ENCODE measurements at regions of chr18 and their contacts with region 1.

Region 1: GRCh38 chr18:74495581-74496507 is at the start of gene CNDP2:
- DNase-seq: peak; percentile 96
- ATAC-seq: peak; percentile 82
- H3K4me3 ChIP-seq: peak within 1 kb of the TSS; percentile 95
- H3K27ac ChIP-seq: peak within 1 kb of the TSS; percentile 76
- H3K4me1 ChIP-seq: peaks cover 18% of the 10 kb centered on the region
- H3K27me3 ChIP-seq: no peaks in the 10 kb centered on the region
- CTCF ChIP-seq: no peak
- EP300 ChIP-seq: no peak
- POLR2A ChIP-seq: peak; percentile 86
- RAD21 ChIP-seq: no peak
- polyA plus RNA-seq, gene CNDP2: 63.5 to 101 TPM

Region 2: GRCh38 chr18:74196220-74197119 is 299.4 kb before region 1 on chr18:
- CTCF ChIA-PET with region 1: interaction called, 14 read pairs
- POLR2A ChIA-PET with region 1: no interaction called
- RAD21 ChIA-PET with region 1: interaction called, 13 read pairs
- SMC1A ChIA-PET with region 1: interaction called, 6 read pairs
- in situ Hi-C with region 1: loop called (anchors 5 kb)
- intact Hi-C with region 1: loop called (anchors 1 kb)
- DNase-seq: peak; percentile 36
- ATAC-seq: peak; percentile 93
- H3K4me3 ChIP-seq: no peak overlapping the region
- H3K27ac ChIP-seq: no peak overlapping the region
- H3K4me1 ChIP-seq: no peaks in the 10 kb centered on the region
- H3K27me3 ChIP-seq: peaks cover 0 to 3% of the 10 kb centered on the region in 2 experiments; a peak in 1 of 4 replicates
- CTCF ChIP-seq: peak; percentile 65 to 85 (median 67)
- EP300 ChIP-seq: no peak
- POLR2A ChIP-seq: no peak
- RAD21 ChIP-seq: peak; percentile 89

Region 3: GRCh38 chr18:74342416-74343043 is 153.3 kb before region 1 on chr18:
- CTCF ChIA-PET with region 1: interaction called, 33 read pairs
- POLR2A ChIA-PET with region 1: no interaction called
- RAD21 ChIA-PET with region 1: interaction called, 4 read pairs
- SMC1A ChIA-PET with region 1: interaction called, 6 read pairs
- in situ Hi-C with region 1: no loop called
- intact Hi-C with region 1: no loop called
- DNase-seq: no peak
- ATAC-seq: 0 out of 3 replicates have a peak, but pooled peaks have one; percentile 45
- H3K4me3 ChIP-seq: no peak overlapping the region
- H3K27ac ChIP-seq: no peak overlapping the region
- H3K4me1 ChIP-seq: no peaks in the 10 kb centered on the region
- H3K27me3 ChIP-seq: no peaks in the 10 kb centered on the region
- CTCF ChIP-seq: peak; percentile 35 to 74 (median 38); a peak in 5 of 6 replicates
- EP300 ChIP-seq: no peak
- POLR2A ChIP-seq: no peak
- RAD21 ChIP-seq: peak; percentile 90

Region 4: DNA sequence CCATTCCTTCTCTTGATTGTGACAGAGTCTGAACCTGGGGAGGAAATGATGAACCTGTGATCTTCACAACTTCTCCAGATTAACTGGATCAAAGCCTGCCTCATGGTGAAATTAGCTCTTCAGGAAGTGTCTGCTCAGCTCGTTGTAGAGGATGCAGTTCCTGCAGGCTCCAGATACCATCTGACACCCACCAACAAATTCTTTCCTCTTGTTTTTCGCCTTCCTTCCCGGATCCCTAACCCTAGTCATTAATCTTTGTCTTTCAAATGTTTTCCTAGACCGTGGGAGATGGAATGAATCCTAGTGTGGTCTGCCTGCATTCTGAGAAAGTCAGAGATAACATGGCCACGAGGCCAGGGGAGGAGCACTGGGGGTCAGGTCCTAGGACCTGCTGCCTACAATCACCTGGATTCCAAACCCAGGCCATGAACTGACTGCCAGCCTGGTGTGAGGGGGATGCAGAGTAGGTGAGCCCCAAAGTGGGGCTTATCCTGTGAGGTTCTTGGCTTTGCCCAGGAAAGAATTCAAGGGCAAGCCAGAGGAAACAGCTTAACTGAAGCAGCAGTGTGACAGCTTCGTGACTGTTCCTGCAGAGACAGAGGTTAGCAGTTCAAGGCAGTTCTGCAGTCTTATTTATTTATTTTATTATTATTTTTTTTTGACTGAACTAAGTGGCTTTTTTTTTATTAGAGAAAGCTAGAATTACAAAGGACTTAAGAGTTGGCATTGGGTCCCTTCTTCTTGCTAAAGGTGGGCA is 106.5 kb before region 1 on chr18:
- CTCF ChIA-PET with region 1: no interaction called
- POLR2A ChIA-PET with region 1: no interaction called
- RAD21 ChIA-PET with region 1: no interaction called
- SMC1A ChIA-PET with region 1: no interaction called
- in situ Hi-C with region 1: no loop called
- intact Hi-C with region 1: no loop called
- DNase-seq: no peak
- ATAC-seq: no peak
- H3K4me3 ChIP-seq: no peak overlapping the region
- H3K27ac ChIP-seq: no peak overlapping the region
- H3K4me1 ChIP-seq: no peaks in the 10 kb centered on the region
- H3K27me3 ChIP-seq: peaks cover 0 to 6% of the 10 kb centered on the region in 2 experiments; a peak in 2 of 4 replicates
- CTCF ChIP-seq: no peak
- EP300 ChIP-seq: no peak
- POLR2A ChIP-seq: no peak
- RAD21 ChIP-seq: no peak

Region 5: DNA sequence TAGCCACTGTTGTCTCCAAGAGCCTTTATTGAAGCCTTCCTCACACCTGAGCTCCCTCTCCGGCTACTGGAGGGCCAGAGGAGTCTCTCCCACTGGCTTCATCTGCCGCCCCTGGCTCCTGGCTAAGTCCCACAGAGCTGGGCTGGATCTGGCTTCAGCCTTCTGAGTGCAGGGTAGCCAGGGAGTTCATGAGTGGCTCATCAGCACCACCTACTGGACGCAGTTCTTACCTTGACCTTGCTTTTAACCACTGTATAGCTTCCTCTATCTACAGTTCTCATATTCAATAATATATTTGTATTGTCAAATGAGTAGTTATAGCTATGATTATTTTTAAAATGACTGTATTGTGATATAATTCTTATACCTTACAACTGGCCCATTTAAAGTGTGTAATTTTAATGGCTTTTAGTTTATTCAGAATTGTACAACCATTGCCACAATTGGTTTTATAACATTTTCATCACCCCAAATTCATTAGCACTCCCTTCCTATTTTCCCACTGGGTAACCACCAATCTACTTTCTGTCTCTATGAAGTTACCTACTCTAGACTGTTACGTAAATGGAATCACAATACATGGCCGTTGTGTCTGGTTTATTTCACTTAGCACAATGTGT is 56.2 kb after region 1 on chr18:
- CTCF ChIA-PET with region 1: interaction called, 17 read pairs
- POLR2A ChIA-PET with region 1: interaction called, 3 read pairs
- RAD21 ChIA-PET with region 1: interaction called, 15 read pairs
- SMC1A ChIA-PET with region 1: interaction called, 9 read pairs
- in situ Hi-C with region 1: no loop called
- intact Hi-C with region 1: no loop called
- DNase-seq: peak; percentile 51
- ATAC-seq: peak; percentile 100
- H3K4me3 ChIP-seq: no peak overlapping the region
- H3K27ac ChIP-seq: no peak overlapping the region
- H3K4me1 ChIP-seq: 0 out of 2 replicates have a peak, but pooled peaks cover 4% of the 10 kb centered on the region
- H3K27me3 ChIP-seq: no peaks in the 10 kb centered on the region; a peak in 1 of 4 replicates
- CTCF ChIP-seq: peak; percentile 76 to 92 (median 76); a peak in 5 of 6 replicates
- EP300 ChIP-seq: no peak
- POLR2A ChIP-seq: no peak
- RAD21 ChIP-seq: peak; percentile 86

Region 6: DNA sequence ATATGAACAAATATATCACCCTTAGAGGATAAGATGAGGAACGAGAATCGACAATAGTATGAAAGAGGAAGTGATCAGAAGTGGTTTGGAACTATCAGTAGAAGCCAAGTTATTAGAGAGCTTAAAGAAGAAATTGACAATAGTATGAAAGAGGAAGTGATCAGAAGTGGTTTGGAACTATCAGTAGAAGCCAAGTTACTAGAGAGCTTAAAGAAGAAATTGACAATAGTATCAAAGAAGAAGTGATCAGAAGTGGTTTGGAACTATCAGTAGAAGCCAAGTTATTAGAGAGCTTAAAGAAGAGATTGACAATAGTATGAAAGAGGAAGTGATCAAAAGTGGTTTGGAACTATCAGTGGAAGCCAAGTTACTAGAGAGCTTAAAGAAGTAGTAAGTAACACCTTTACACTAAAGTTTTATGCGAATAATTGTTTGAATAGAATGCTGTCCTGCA is 277.4 kb after region 1 on chr18:
- CTCF ChIA-PET with region 1: no interaction called
- POLR2A ChIA-PET with region 1: no interaction called
- RAD21 ChIA-PET with region 1: no interaction called
- SMC1A ChIA-PET with region 1: no interaction called
- in situ Hi-C with region 1: no loop called
- intact Hi-C with region 1: no loop called
- DNase-seq: peak; percentile 53
- ATAC-seq: peak; percentile 90
- H3K4me3 ChIP-seq: no peak overlapping the region
- H3K27ac ChIP-seq: no peak overlapping the region
- H3K4me1 ChIP-seq: peaks cover 12% of the 10 kb centered on the region
- H3K27me3 ChIP-seq: no peaks in the 10 kb centered on the region
- CTCF ChIP-seq: no peak
- EP300 ChIP-seq: peak in 1 of 2 experiments; percentile 75; a peak in 2 of 4 replicates
- POLR2A ChIP-seq: no peak
- RAD21 ChIP-seq: no peak

Region 7: DNA sequence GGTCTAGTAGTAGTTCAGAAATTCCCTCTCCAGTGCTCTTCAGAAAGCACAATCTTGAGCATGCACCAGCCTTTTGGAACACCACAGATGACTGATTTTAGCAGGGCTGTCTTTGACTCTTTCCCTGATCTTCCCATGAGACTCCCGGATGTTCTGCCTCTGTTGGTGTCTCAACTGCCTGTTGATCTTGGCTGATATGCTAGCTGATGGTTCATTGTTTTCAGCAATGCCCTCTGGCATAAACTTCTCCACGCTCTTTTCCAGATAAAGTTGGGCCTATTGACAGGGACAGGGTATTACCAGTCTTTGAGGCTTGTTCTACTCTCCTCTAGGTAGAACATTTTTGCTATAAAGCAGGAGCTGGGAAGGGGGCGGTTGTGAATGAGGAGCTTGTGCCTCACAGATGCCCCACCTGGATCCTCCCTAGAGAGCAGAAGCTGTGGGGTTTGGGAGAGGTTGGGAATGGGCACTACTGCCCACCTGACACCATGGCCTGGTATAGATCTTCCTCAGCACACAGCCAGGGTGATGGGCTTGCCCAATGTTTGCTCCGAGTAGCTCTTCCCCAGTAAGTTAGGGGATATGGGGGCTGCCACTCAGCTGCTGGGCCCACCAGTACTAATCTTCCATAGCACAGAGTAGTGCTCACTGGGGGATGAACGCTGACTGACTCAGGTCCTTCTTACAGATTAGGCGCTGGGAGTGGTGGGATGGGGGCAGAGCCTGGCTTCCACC is 601.8 kb after region 1 on chr18:
- CTCF ChIA-PET with region 1: no interaction called
- POLR2A ChIA-PET with region 1: no interaction called
- RAD21 ChIA-PET with region 1: no interaction called
- SMC1A ChIA-PET with region 1: no interaction called
- in situ Hi-C with region 1: no loop called
- intact Hi-C with region 1: no loop called
- DNase-seq: no peak
- ATAC-seq: no peak
- H3K4me3 ChIP-seq: no peak overlapping the region
- H3K27ac ChIP-seq: no peak overlapping the region
- H3K4me1 ChIP-seq: no peaks in the 10 kb centered on the region
- H3K27me3 ChIP-seq: no peaks in the 10 kb centered on the region
- CTCF ChIP-seq: no peak
- EP300 ChIP-seq: no peak
- POLR2A ChIP-seq: no peak
- RAD21 ChIP-seq: no peak

Region 8: GRCh38 chr18:76492669-76493212 is 1996.9 kb after region 1 on chr18:
- CTCF ChIA-PET with region 1: no interaction called
- POLR2A ChIA-PET with region 1: no interaction called
- RAD21 ChIA-PET with region 1: no interaction called
- SMC1A ChIA-PET with region 1: no interaction called
- in situ Hi-C with region 1: no loop called
- intact Hi-C with region 1: loop called (anchors 10 kb)
- DNase-seq: peak; percentile 94
- ATAC-seq: peak; percentile 80
- H3K4me3 ChIP-seq: peak overlapping the region; percentile 79
- H3K27ac ChIP-seq: peak overlapping the region; percentile 79
- H3K4me1 ChIP-seq: peaks cover 9% of the 10 kb centered on the region; the same call in 1 of the 2 replicates
- H3K27me3 ChIP-seq: no peaks in the 10 kb centered on the region
- CTCF ChIP-seq: no peak
- EP300 ChIP-seq: no peak
- POLR2A ChIP-seq: no peak; the same call in 1 of the 2 replicates
- RAD21 ChIP-seq: no peak

Measured in GM12878 (cell line).